Right ventricle myocardium inferior (tissue), 1 donor: ENCODE measurements at regions of chr1 and their contacts with region 1.

Region 1: DNA sequence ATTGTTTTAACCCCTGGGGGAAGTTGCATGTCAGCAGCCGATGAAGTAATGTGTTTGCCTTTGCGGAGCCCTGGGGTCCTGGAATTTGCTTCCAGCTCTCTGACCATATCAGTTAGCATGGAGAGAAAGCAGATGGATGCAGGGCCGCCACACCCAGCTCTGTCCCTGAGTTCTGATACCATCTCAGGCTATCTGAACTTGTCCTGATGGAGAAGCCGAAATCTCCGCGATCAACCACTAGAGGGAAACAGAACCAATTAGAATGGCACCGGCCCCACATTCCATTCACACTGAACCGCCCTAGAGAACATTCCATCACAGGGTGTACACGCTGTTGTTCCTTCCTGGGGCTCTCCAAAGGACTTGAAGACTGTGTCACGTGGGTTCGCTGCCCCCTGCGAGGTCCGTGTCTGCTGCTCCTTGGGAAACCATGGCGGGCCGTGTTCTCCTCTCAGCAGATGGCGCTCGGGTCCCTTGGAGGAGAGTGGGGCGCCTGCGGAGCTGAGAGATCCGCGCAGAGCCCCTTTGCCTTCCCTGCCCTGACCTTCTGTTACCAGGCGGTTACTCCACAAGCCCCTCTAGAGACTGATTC is 75.4 kb downstream of the ABCA4 start:
- DNase-seq: peak; percentile 96
- ATAC-seq: peak; percentile 94

Region 2: DNA sequence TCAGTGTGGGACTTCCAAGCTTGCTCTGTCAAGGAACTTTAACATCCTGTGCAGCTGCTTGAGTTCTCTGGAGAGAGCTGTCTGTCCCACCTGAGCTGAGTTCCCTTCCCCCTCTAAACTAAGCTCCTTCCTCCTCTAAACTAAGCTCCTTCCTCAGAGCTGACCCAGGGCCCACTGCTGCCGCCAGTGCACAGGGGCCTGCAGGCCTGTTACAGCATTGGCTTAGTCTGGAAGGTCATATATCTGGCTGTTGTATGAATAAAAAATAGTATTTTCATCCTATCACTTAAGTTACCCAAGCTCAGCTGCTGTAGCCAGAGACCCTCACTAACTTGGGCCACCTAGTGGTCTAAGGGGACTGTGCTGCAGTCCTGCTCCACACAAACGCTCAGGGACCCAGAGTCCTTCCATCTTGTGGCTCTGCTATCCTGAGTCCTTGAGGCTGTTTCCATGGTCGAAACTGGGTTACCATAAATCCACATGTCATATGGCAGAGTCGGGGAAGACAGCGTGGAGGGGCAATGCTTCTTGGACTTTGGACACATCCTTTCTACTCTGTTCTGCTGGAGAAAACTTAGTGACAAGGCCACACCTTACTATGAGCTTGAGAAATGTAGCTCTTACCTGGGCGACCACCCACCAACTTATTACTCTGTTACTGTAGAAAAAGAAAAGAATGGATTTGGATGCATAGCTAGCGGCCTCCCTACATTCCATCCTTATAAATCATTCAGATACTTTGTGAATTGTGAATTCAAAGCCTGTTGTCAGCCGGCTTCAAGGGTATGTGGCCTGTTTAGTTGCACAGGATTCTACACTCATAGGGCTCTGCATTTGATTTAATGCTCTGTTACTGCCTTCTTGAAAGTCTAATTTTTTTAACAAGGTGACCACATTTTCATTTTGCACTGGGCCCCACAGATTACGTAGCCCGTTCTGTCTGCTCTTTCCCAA is 65.0 kb before region 1 on chr1:
- intact Hi-C with region 1: no loop called
- DNase-seq: no peak
- ATAC-seq: peak; percentile 21

Region 3: DNA sequence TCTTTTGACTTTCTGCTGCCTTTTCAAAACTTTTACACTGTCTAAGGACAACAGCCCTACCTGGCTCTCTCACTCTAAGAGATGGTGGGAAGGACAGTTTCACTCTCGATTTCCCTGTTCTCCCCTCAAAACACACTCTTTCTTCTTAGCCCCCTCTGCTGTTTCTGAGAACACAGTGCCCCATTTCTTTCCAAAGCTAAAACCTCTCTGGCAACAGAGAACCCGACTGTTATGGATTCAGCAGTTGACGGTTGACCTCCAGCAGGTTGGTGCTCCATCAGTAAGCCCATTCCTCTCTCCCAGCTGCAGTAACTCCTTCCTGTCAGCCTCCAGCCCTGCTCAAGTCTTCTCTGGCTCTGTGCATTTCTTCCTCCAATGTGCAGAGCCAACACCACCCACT is 284.4 kb after region 1 on chr1:
- intact Hi-C with region 1: loop called (anchors 2 kb)
- DNase-seq: no peak
- ATAC-seq: peak; percentile 20